ENCODE measurements at regions of chr1 and their contacts with region 1.

Region 1: DNA sequence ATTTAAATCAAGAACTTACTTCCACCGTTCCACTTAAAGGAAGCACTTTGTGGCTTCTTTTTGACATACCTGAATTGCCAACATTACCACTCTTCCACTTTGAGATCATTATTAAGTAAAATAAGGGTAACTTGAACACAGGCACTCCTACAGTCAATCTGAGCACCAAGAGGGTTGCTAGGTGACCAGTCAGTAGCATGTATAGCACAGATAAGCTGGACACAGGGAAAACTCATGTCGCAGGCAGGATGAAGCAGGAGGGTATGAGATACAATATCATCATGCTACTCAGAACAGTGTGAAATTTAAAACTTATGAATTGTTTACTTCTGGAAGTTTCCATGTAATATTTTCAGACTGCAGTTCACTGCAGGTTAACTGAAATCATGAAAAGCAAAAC is 47.0 kb upstream of the RAP1GAP start:
- DNase-seq: no peak
- H3K4me3 ChIP-seq: no peak overlapping the region
- H3K27ac ChIP-seq: no peak overlapping the region
- H3K4me1 ChIP-seq: no peaks in the 10 kb centered on the region
- H3K27me3 ChIP-seq: no peaks in the 10 kb centered on the region
- CTCF ChIP-seq: no peak
- POLR2A ChIP-seq: no peak

Region 2: DNA sequence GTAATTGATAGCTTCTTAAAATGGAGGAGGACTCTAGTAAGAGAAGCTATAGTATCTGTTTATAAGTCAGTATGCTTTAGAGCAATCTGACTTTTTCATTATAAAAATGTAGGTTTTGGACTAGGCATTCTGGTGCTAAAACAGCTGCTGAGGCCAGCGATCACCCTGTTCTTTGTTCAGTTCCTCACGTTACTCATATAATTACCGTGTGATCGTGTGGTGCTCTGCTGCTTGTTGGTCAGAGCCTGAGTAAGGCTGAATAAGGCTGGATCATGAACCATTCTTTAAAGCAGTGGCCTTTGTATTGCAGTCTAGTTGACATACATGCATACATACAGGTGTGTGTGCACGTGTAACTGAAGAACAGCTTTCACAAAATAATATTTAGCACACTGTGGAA is 361.6 kb after region 1 on chr1:
- intact Hi-C with region 1: loop called (anchors 5 kb)
- DNase-seq: no peak
- H3K4me3 ChIP-seq: no peak overlapping the region
- H3K27ac ChIP-seq: no peak overlapping the region
- H3K4me1 ChIP-seq: peaks cover 0 to 5% of the 10 kb centered on the region in 2 donors
- H3K27me3 ChIP-seq: no peaks in the 10 kb centered on the region
- CTCF ChIP-seq: no peak
- POLR2A ChIP-seq: no peak